ENCODE measurements at regions of chr18 and their contacts with region 1.

Region 1: DNA sequence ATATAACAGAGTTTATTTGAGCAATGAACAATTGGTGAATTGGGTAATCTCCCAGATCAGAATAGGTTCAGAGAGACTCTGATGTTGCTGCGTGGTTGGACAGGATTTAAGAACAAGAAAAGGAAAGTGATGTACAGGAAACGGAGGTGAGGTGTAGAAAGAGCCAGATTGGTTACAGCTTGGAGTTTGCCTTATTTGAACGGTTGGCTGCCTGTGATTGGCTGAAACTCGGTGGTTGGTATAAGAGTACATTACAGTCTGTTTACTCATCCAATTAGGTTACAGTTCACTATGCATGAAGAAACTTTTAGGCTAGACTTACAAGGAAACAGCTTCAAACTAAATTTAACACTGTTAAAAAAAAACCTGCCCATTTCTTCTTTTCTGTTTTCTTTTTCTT is 68.0 kb upstream of the CABLES1 start:
- DNase-seq: no peak
- H3K4me3 ChIP-seq: no peak overlapping the region
- H3K27ac ChIP-seq: no peak overlapping the region
- H3K4me1 ChIP-seq: no peaks in the 10 kb centered on the region
- H3K27me3 ChIP-seq: no peaks in the 10 kb centered on the region
- CTCF ChIP-seq: no peak

Region 2: GRCh38 chr18:23556145-23556780 is 489.0 kb after region 1 on chr18:
- intact Hi-C with region 1: loop called (anchors 5 kb)
- DNase-seq: no peak
- H3K4me3 ChIP-seq: no peak overlapping the region
- H3K27ac ChIP-seq: no peak overlapping the region
- H3K4me1 ChIP-seq: no peaks in the 10 kb centered on the region
- H3K27me3 ChIP-seq: no peaks in the 10 kb centered on the region
- CTCF ChIP-seq: no peak